Upper lobe of right lung (tissue), 1 donor: ENCODE measurements at regions of chr12 and their contacts with region 1.

Region 1: DNA sequence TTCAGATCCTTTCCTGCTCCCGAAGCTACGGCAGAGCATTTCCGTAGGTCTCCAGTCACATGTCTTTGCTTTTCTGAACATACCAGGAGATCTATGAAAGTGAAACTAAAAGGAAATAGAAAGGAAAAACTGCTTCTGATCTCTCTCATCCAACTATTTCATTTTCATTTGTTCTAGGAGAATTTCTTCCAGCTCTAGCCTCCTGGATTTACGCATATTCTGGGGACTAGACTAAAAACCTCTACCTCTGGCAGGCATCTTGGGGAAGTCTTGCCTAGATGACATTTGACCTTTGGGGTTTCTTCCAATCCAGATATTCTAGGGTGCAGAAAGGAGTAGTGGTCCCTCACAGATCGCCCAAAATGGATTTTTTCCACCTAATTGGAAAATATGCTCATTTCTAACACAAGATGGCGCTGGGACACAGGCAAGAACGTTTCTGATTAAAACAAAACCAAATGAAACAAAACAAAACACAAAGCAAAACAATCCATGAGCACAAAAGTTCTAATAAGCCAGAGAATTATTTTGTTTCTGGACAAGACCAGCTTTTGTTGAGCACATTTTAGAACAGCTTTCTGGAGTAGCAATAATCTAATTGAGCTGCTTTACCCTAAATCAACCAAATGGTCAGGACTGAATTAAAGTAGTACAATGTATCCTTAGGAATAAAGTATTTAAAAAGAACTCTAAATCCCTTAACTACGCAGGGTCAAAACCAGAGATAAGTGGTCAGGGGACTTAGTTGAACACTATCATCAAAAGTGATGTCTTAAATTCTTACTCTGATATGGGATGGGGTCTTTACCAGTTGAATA is 12.3 kb upstream of the PARP11 start:
- DNase-seq: no peak
- ATAC-seq: peak; percentile 62
- H3K4me3 ChIP-seq: peak overlapping the region; percentile 43
- H3K27ac ChIP-seq: peak overlapping the region; percentile 64
- H3K4me1 ChIP-seq: no peaks in the 10 kb centered on the region
- H3K27me3 ChIP-seq: peaks cover 12% of the 10 kb centered on the region
- CTCF ChIP-seq: peak; percentile 78

Region 2: GRCh38 chr12:3752741-3753486 is 132.6 kb before region 1 on chr12 and contains the start of gene CRACR2A:
- intact Hi-C with region 1: no loop called
- DNase-seq: peak; percentile 85
- ATAC-seq: peak; percentile 88
- H3K4me3 ChIP-seq: peak within 1 kb of the TSS; percentile 60
- H3K27ac ChIP-seq: peak within 1 kb of the TSS; percentile 82
- H3K4me1 ChIP-seq: peaks cover 8% of the 10 kb centered on the region
- H3K27me3 ChIP-seq: no peaks in the 10 kb centered on the region
- CTCF ChIP-seq: peak; percentile 65
- total RNA-seq, gene CRACR2A: 5.4 TPM

Region 3: DNA sequence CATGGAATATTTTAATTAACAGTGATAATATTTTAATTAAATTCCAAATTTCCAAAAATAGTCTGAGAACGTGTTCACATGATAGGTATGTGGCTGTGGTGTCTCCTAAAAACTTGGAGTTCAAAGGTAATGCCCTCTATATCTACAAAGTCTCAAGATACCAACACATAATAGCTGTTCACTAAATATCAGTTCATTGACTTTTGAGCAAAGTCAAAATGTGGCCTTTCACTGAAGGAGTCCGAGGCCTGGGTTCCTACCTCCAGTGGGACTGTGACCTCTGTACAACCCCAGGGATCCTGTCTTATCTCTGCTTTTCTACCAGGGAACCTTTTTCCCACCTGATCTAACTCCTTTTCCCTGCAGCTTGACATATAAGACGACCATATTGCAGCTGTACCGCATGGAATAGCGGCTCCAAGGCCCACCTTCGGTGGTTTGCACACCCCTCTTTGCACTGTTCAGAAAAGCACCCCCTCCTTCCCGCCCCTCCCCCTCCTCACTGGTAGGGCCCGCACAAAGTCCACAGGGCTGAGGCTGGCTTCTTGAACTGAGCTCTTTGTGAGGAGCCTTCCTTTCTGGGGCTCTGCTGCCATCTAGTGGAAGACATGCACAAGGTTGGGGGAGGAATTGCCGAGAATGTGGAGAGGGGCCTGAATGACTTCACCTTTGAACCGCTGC is 391.2 kb after region 1 on chr12:
- intact Hi-C with region 1: loop called (anchors 10 kb)
- DNase-seq: peak; percentile 87
- ATAC-seq: peak; percentile 82
- H3K4me3 ChIP-seq: peak overlapping the region; percentile 77
- H3K27ac ChIP-seq: no peak overlapping the region
- H3K4me1 ChIP-seq: peaks cover 60% of the 10 kb centered on the region
- H3K27me3 ChIP-seq: peaks cover 20% of the 10 kb centered on the region
- CTCF ChIP-seq: peak; percentile 89